B cell (primary cell): ENCODE measurements at regions of chrX and their contacts with region 1.

Region 1: DNA sequence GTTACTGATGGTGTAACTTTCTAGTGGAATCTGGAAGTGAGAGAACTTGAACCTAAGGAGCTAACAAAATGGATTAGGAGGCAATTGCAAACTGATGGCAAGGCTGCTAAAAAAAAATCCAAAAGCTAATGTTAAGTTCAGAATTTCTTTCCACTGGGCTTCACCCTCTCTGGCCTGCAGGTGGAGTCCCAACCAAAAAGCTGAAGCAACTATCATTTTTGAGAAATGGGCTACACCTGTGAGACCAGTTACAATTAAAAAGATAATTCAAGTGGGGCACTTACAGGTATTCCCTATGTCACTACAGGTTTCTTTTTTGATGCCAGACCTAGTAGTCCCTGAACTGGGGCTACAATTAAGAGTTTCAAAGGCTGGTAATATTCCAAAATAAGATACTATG is 142.1 kb upstream of the FTHL17 start:
- DNase-seq: peak; percentile 40
- ATAC-seq: peak; percentile 51
- H3K4me3 ChIP-seq: no peak overlapping the region
- H3K4me3 Mint-ChIP-seq: no peak overlapping the region
- H3K27ac ChIP-seq: no peak overlapping the region
- H3K27ac Mint-ChIP-seq: no peak overlapping the region
- H3K4me1 ChIP-seq: peaks cover 0 to 5% of the 10 kb centered on the region in 2 donors
- H3K4me1 Mint-ChIP-seq: peaks cover 11% of the 10 kb centered on the region
- H3K27me3 ChIP-seq: no peaks in the 10 kb centered on the region
- H3K27me3 Mint-ChIP-seq: no peaks in the 10 kb centered on the region
- CTCF ChIP-seq: peak; percentile 64

Region 2: GRCh38 chrX:31036895-31037294 is 177.0 kb before region 1 on chrX:
- CTCF ChIA-PET with region 1: interaction called, 78 read pairs
- POLR2A ChIA-PET with region 1: no interaction called
- intact Hi-C with region 1: loop called (anchors 1 kb)
- DNase-seq: peak; percentile 26
- ATAC-seq: peak; percentile 39
- H3K4me3 ChIP-seq: no peak overlapping the region
- H3K4me3 Mint-ChIP-seq: no peak overlapping the region
- H3K27ac ChIP-seq: no peak overlapping the region
- H3K27ac Mint-ChIP-seq: no peak overlapping the region
- H3K4me1 ChIP-seq: no peaks in the 10 kb centered on the region
- H3K4me1 Mint-ChIP-seq: no peaks in the 10 kb centered on the region
- H3K27me3 ChIP-seq: no peaks in the 10 kb centered on the region
- H3K27me3 Mint-ChIP-seq: peaks cover 12% of the 10 kb centered on the region
- CTCF ChIP-seq: peak; percentile 63

Region 3: GRCh38 chrX:31266172-31267076 is 52.5 kb after region 1 on chrX:
- CTCF ChIA-PET with region 1: interaction called, 7 read pairs
- POLR2A ChIA-PET with region 1: no interaction called
- intact Hi-C with region 1: loop called (anchors 2 kb)
- DNase-seq: peak; percentile 59
- ATAC-seq: peak; percentile 91
- H3K4me3 ChIP-seq: peak overlapping the region in 4 of 5 experiments; percentile 53 to 70 (median 64)
- H3K4me3 Mint-ChIP-seq: peak overlapping the region; percentile 90
- H3K27ac ChIP-seq: no peak overlapping the region
- H3K27ac Mint-ChIP-seq: peak overlapping the region; percentile 67
- H3K4me1 ChIP-seq: peaks cover 0 to 4% of the 10 kb centered on the region in 2 donors
- H3K4me1 Mint-ChIP-seq: peaks cover 12% of the 10 kb centered on the region
- H3K27me3 ChIP-seq: no peaks in the 10 kb centered on the region
- H3K27me3 Mint-ChIP-seq: no peaks in the 10 kb centered on the region
- CTCF ChIP-seq: no peak

Region 4: GRCh38 chrX:31279359-31279758 is 65.4 kb after region 1 on chrX:
- CTCF ChIA-PET with region 1: interaction called, 12 read pairs
- POLR2A ChIA-PET with region 1: no interaction called
- intact Hi-C with region 1: no loop called
- DNase-seq: no peak
- ATAC-seq: no peak
- H3K4me3 ChIP-seq: no peak overlapping the region
- H3K4me3 Mint-ChIP-seq: no peak overlapping the region
- H3K27ac ChIP-seq: no peak overlapping the region
- H3K27ac Mint-ChIP-seq: no peak overlapping the region
- H3K4me1 ChIP-seq: no peaks in the 10 kb centered on the region
- H3K4me1 Mint-ChIP-seq: no peaks in the 10 kb centered on the region
- H3K27me3 ChIP-seq: peaks cover 0 to 2% (median under 1%) of the 10 kb centered on the region in 4 experiments
- H3K27me3 Mint-ChIP-seq: no peaks in the 10 kb centered on the region
- CTCF ChIP-seq: no peak

Region 5: GRCh38 chrX:31293409-31293808 is 79.5 kb after region 1 on chrX:
- CTCF ChIA-PET with region 1: interaction called, 109 read pairs
- POLR2A ChIA-PET with region 1: no interaction called
- intact Hi-C with region 1: loop called (anchors 1 kb)
- DNase-seq: peak; percentile 46
- ATAC-seq: peak; percentile 72
- H3K4me3 ChIP-seq: no peak overlapping the region
- H3K4me3 Mint-ChIP-seq: no peak overlapping the region
- H3K27ac ChIP-seq: no peak overlapping the region
- H3K27ac Mint-ChIP-seq: no peak overlapping the region
- H3K4me1 ChIP-seq: no peaks in the 10 kb centered on the region
- H3K4me1 Mint-ChIP-seq: no peaks in the 10 kb centered on the region
- H3K27me3 ChIP-seq: no peaks in the 10 kb centered on the region
- H3K27me3 Mint-ChIP-seq: no peaks in the 10 kb centered on the region
- CTCF ChIP-seq: peak; percentile 50

Region 6: GRCh38 chrX:31423609-31424189 is 209.8 kb after region 1 on chrX:
- CTCF ChIA-PET with region 1: interaction called, 10 read pairs
- POLR2A ChIA-PET with region 1: no interaction called
- intact Hi-C with region 1: no loop called
- DNase-seq: peak; percentile 12
- ATAC-seq: no peak
- H3K4me3 ChIP-seq: no peak overlapping the region
- H3K4me3 Mint-ChIP-seq: no peak overlapping the region
- H3K27ac ChIP-seq: no peak overlapping the region
- H3K27ac Mint-ChIP-seq: no peak overlapping the region
- H3K4me1 ChIP-seq: no peaks in the 10 kb centered on the region
- H3K4me1 Mint-ChIP-seq: peaks cover 7% of the 10 kb centered on the region
- H3K27me3 ChIP-seq: no peaks in the 10 kb centered on the region
- H3K27me3 Mint-ChIP-seq: no peaks in the 10 kb centered on the region
- CTCF ChIP-seq: no peak

Region 7: DNA sequence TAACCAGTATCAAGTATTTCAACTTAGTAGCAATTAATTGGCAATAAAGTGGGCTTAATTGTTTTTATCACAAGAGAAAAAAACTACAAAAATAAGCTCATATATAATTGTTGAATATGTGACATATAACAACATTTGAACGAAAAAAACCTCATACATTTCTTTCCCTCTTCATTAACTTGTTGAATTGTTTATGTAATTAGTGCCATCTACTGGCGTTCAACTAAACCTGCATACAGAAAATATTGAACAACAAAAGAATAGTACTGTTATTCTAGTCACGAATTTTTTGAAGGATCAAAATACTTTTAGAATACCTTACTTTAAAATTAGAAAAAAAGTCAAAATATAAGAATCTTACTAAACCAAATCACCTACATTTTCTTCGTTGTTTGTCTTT is 444.4 kb after region 1 on chrX:
- CTCF ChIA-PET with region 1: interaction called, 12 read pairs
- POLR2A ChIA-PET with region 1: no interaction called
- intact Hi-C with region 1: no loop called
- DNase-seq: peak; percentile 2
- ATAC-seq: no peak
- H3K4me3 ChIP-seq: no peak overlapping the region
- H3K4me3 Mint-ChIP-seq: no peak overlapping the region
- H3K27ac ChIP-seq: no peak overlapping the region
- H3K27ac Mint-ChIP-seq: no peak overlapping the region
- H3K4me1 ChIP-seq: no peaks in the 10 kb centered on the region
- H3K4me1 Mint-ChIP-seq: no peaks in the 10 kb centered on the region
- H3K27me3 ChIP-seq: no peaks in the 10 kb centered on the region
- H3K27me3 Mint-ChIP-seq: no peaks in the 10 kb centered on the region
- CTCF ChIP-seq: peak; percentile 34